ENCODE measurements at regions of chr7 and their contacts with region 1.

Region 1: DNA sequence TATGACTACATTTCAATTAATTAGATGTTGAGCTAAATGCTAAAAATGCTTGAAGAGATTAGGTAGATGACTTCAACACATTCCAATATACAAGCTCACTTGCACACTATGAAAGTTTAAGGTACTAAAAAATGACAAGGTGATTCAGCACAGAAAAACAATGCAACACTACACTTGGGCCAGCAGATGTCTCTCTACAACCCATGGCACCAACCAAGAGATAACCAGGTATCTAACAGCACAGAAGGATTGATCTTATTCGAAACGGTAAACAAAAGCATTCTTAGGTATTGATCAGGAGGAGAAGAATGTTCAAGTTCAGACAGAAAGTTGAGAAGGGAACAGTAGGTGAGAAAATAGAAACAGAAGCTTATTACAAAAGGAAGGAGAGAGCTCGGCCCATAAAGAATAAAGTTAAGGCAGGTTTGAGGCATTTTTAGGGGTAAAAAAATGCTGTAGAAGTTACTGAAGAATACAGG is 248.2 kb upstream of the KLF14 start:
- DNase-seq: no peak
- ATAC-seq: peak; percentile 48

Region 2: DNA sequence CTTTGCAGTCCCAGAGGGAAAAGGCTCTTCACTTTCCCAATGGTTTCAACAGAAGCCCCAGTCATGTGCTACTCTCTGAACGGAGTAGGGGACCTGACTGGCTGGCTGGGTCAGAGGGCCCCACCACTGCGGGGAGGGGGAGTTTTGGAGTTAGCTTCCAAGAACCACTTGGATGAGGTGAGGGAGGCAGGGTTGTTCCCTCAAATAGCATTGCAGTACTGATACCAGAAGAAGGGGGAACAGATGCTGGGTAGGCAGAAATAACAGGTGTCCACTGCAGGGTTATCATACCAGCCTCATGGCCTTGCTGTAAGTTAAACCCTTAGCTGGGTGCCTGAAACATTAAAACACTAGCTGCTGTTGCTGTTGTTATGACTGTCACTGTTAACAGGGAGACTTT is 1160.7 kb before region 1 on chr7:
- intact Hi-C with region 1: no loop called
- DNase-seq: no peak
- ATAC-seq: no peak

Region 3: GRCh38 chr7:130804220-130804619 is 178.0 kb before region 1 on chr7:
- intact Hi-C with region 1: no loop called
- DNase-seq: no peak
- ATAC-seq: no peak

Region 4: GRCh38 chr7:131040467-131040932 is 58.3 kb after region 1 on chr7:
- intact Hi-C with region 1: loop called (anchors 2 kb)
- DNase-seq: no peak
- ATAC-seq: peak; percentile 64